ENCODE measurements at regions of chr15 and their contacts with region 1.

Region 1: GRCh38 chr15:62389885-62390790 is 225.1 kb upstream of the C2CD4B start:
- DNase-seq: peak; percentile 48 to 63
- H3K4me3 ChIP-seq: peak within 1 kb of the TSS; percentile 93
- H3K27ac ChIP-seq: 0 out of 2 replicates have a peak within 1 kb of the TSS, but pooled peaks have one; percentile 24
- H3K4me1 ChIP-seq: no peaks in the 10 kb centered on the region
- H3K27me3 ChIP-seq: no peaks in the 10 kb centered on the region
- CTCF ChIP-seq: no peak

Region 2: DNA sequence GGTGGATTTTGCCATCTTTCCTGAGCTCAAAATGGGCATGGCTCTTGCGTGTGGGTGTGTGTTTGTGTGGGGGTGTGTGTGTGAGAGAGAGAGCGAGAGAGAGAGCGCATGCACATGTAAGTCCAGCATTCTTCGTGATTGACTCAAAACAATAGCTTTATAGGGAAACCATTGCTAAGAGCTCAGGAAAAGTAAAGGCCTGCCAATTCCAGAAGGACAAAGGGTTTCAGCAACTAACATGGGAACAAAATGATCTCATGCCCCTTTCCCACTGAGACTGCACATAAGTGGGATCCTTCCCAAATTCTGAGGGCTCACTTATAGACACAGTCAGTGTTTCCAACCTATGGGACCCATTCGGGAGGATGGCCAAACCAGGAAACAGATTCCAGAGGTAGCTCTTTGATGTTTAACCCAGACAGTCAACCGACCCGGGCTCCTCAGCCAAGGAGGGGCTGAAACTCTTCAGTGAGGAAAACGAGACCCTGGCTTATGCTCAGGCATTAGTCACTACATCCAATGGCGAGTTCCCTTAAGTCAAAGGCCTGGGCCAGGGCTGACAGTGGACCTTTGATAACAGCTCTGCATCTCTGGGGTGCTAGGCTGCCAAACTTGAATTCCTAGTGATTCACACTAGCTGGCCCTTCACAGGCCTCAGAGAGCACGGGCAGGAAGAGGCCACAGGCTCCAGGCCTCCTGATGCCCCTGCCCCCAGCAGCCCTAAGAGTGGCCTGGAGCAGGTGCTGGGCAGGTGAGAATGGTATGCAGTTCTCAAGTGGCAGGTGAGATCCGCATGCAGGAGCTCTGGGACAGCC is 79.9 kb after region 1 on chr15:
- CTCF ChIA-PET with region 1: no interaction called
- POLR2A ChIA-PET with region 1: no interaction called
- intact Hi-C with region 1: loop called (anchors 5 kb)
- DNase-seq: peak; percentile 54 to 64
- H3K4me3 ChIP-seq: no peak overlapping the region
- H3K27ac ChIP-seq: no peak overlapping the region
- H3K4me1 ChIP-seq: peaks cover 12% of the 10 kb centered on the region
- H3K27me3 ChIP-seq: no peaks in the 10 kb centered on the region
- CTCF ChIP-seq: no peak

Region 3: GRCh38 chr15:62606376-62607113 is 216.4 kb after region 1 on chr15:
- CTCF ChIA-PET with region 1: no interaction called
- POLR2A ChIA-PET with region 1: no interaction called
- intact Hi-C with region 1: loop called (anchors 5 kb)
- DNase-seq: peak; percentile 37 to 94
- H3K4me3 ChIP-seq: no peak overlapping the region
- H3K27ac ChIP-seq: peak overlapping the region; percentile 62
- H3K4me1 ChIP-seq: peaks cover 46% of the 10 kb centered on the region
- H3K27me3 ChIP-seq: no peaks in the 10 kb centered on the region
- CTCF ChIP-seq: no peak

Region 4: DNA sequence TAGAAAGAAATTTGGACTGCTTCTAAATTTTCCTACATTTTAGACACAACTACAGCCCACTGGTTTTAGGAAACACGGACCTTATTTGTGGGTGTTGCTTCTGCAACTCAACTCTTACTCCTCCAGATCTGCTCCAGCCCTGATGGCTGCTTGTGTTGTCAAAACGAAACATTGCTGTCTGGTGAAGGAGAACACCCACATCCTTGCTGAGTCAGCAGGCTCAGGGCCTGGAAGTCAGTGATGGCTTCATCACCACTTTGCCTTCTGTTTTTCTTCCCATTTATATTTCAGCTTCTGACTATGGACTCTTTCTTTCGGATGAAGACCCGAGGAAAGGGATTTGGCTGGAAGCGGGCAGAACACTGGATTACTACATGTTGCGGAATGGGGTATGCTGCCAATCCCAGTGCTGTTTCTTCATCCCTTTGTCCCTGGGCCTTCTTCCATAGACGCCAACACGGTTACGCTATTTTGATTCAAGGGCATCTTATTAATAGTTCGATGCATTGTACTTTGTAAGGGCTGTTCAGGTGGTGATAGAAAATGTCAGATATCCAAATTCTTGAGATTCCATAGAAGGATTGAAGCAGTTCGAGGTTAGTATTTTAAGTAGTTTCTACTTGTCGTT is 259.8 kb after region 1 on chr15:
- CTCF ChIA-PET with region 1: no interaction called
- POLR2A ChIA-PET with region 1: no interaction called
- intact Hi-C with region 1: loop called (anchors 5 kb)
- DNase-seq: no peak
- H3K4me3 ChIP-seq: no peak overlapping the region
- H3K27ac ChIP-seq: no peak overlapping the region
- H3K4me1 ChIP-seq: peaks cover 11% of the 10 kb centered on the region
- H3K27me3 ChIP-seq: no peaks in the 10 kb centered on the region
- CTCF ChIP-seq: no peak

Region 5: DNA sequence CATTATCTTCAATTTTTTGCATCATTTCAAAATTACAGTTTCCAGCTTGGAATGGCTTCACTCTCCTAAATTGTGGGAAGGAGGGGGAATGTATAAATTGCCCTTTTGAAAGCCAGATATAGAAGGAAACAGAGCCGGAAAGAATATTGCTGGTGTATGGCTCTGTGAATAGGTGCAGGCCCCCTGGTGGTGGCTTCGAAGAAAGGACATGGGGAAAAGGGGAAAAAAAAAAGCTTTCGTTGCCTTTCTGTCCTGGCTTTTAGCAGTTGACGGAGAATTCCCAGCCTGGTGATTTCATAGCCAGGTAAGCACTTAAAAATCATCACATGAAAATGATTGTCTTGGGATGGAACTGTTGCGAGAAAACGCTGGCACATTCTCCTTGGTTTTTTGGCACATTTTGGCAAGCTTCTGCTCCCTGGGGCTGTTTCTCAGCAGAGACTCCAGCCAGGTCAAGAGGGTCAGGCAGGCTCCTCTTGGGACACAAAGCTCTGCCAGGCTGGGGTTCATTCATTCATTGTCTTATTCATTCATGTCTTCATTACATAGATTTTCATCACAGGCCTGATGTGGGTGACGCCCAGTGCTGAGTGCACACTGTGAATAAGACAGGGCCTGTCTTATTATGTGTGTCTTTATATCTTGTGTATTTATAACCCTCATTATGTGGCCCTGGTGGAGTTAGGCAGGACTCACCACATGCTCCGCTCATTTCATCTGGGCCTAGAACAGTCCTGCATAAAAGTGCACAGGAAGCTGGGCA is 352.5 kb after region 1 on chr15:
- CTCF ChIA-PET with region 1: no interaction called
- POLR2A ChIA-PET with region 1: no interaction called
- intact Hi-C with region 1: loop called (anchors 1 kb)
- DNase-seq: peak; percentile 39 to 51
- H3K4me3 ChIP-seq: no peak overlapping the region
- H3K27ac ChIP-seq: peak overlapping the region; percentile 47; the same call in 1 of the 2 replicates
- H3K4me1 ChIP-seq: peaks cover 31% of the 10 kb centered on the region
- H3K27me3 ChIP-seq: no peaks in the 10 kb centered on the region
- CTCF ChIP-seq: peak; percentile 88

Region 6: GRCh38 chr15:62758126-62758951 is 368.2 kb after region 1 on chr15:
- CTCF ChIA-PET with region 1: no interaction called
- POLR2A ChIA-PET with region 1: interaction called, 4 read pairs
- intact Hi-C with region 1: loop called (anchors 5 kb)
- DNase-seq: peak; percentile 34 to 78
- H3K4me3 ChIP-seq: peak overlapping the region; percentile 20; the same call in 1 of the 2 replicates
- H3K27ac ChIP-seq: peak overlapping the region; percentile 66
- H3K4me1 ChIP-seq: peaks cover 41% of the 10 kb centered on the region
- H3K27me3 ChIP-seq: no peaks in the 10 kb centered on the region
- CTCF ChIP-seq: no peak